MCF 10A (cell line): ENCODE measurements at regions of chr15 and their contacts with region 1.

Region 1: GRCh38 chr15:39580117-39580484 is 778 bp upstream of the THBS1 start:
- DNase-seq: peak; percentile 95
- H3K4me3 Mint-ChIP-seq: peak overlapping the region; percentile 78
- H3K27ac Mint-ChIP-seq: peak overlapping the region; percentile 24
- H3K4me1 Mint-ChIP-seq: peaks cover 38% of the 10 kb centered on the region
- H3K27me3 Mint-ChIP-seq: no peaks in the 10 kb centered on the region
- CTCF ChIP-seq: peak; percentile 96

Region 2: DNA sequence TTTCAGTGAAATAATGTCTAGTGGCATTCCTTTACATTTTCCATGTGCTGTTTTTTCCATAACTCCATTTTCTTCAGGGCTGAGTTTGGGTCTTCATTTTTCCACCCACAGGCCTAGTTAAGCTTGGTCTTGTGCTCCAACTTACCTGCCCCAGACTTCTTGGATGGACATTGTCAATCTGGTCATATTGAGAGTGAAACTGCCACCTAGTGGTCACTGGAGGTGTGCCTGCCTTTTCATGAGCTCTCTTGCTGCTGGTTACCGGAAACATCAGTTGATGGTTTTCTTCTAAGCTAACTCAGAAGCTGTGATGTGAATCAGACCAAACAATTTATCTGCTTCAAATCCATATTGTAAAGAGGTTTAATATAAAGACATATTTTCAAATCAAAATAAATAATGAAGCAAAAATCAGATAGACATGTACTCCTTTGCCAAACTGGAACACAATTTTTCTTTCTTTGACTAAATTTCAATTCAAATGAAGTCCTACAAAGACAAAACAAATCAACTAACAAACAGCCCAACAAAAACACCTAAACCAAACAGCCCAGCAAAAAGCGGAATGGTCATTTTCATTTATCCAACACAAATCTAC is 880.4 kb before region 1 on chr15:
- CTCF ChIA-PET with region 1: interaction called, 10 read pairs
- POLR2A ChIA-PET with region 1: no interaction called
- intact Hi-C with region 1: no loop called
- DNase-seq: peak; percentile 72
- H3K4me3 Mint-ChIP-seq: no peak overlapping the region
- H3K27ac Mint-ChIP-seq: no peak overlapping the region
- H3K4me1 Mint-ChIP-seq: no peaks in the 10 kb centered on the region
- H3K27me3 Mint-ChIP-seq: no peaks in the 10 kb centered on the region
- CTCF ChIP-seq: peak; percentile 68

Region 3: DNA sequence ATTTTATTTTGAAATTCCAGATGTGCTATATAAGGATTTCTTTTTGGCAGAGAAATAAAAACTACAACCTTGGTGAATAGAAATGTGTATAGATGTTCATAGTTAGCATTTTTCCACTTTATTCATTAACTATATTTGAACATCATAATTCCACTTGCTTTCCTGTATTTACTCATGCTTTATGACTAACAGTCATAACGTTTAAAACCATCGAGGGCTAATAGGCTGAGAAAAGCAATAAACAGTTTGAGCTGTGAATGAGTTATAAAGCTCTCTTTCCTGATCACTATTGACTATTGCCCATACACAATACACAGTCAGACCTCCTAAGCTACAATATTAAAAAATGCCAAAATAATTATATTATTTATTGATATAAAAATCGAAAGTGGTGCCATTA is 513.4 kb before region 1 on chr15:
- CTCF ChIA-PET with region 1: no interaction called
- POLR2A ChIA-PET with region 1: no interaction called
- intact Hi-C with region 1: no loop called
- DNase-seq: no peak
- H3K4me3 Mint-ChIP-seq: no peak overlapping the region
- H3K27ac Mint-ChIP-seq: no peak overlapping the region
- H3K4me1 Mint-ChIP-seq: no peaks in the 10 kb centered on the region
- H3K27me3 Mint-ChIP-seq: no peaks in the 10 kb centered on the region
- CTCF ChIP-seq: no peak

Region 4: GRCh38 chr15:39125904-39126303 is 454.2 kb before region 1 on chr15:
- CTCF ChIA-PET with region 1: interaction called, 3 read pairs
- POLR2A ChIA-PET with region 1: interaction called, 3 read pairs
- intact Hi-C with region 1: loop called (anchors 2 kb)
- DNase-seq: peak; percentile 78
- H3K4me3 Mint-ChIP-seq: no peak overlapping the region
- H3K27ac Mint-ChIP-seq: no peak overlapping the region
- H3K4me1 Mint-ChIP-seq: peaks cover 26% of the 10 kb centered on the region
- H3K27me3 Mint-ChIP-seq: no peaks in the 10 kb centered on the region
- CTCF ChIP-seq: peak; percentile 45

Region 5: GRCh38 chr15:39195988-39196486 is 384.1 kb before region 1 on chr15:
- CTCF ChIA-PET with region 1: interaction called, 16 read pairs
- POLR2A ChIA-PET with region 1: interaction called, 16 read pairs
- intact Hi-C with region 1: no loop called
- DNase-seq: peak; percentile 99
- H3K4me3 Mint-ChIP-seq: no peak overlapping the region
- H3K27ac Mint-ChIP-seq: peak overlapping the region; percentile 88
- H3K4me1 Mint-ChIP-seq: peaks cover 61% of the 10 kb centered on the region
- H3K27me3 Mint-ChIP-seq: no peaks in the 10 kb centered on the region
- CTCF ChIP-seq: no peak

Region 6: GRCh38 chr15:39404767-39405181 is 175.3 kb before region 1 on chr15:
- CTCF ChIA-PET with region 1: interaction called, 3 read pairs
- POLR2A ChIA-PET with region 1: interaction called, 5 read pairs
- intact Hi-C with region 1: loop called (anchors 5 kb)
- DNase-seq: peak; percentile 97
- H3K4me3 Mint-ChIP-seq: no peak overlapping the region
- H3K27ac Mint-ChIP-seq: no peak overlapping the region
- H3K4me1 Mint-ChIP-seq: peaks cover 22% of the 10 kb centered on the region
- H3K27me3 Mint-ChIP-seq: no peaks in the 10 kb centered on the region
- CTCF ChIP-seq: no peak

Region 7: GRCh38 chr15:39455471-39455991 is 124.6 kb before region 1 on chr15:
- CTCF ChIA-PET with region 1: no interaction called
- POLR2A ChIA-PET with region 1: no interaction called
- intact Hi-C with region 1: no loop called
- DNase-seq: peak; percentile 42
- H3K4me3 Mint-ChIP-seq: no peak overlapping the region
- H3K27ac Mint-ChIP-seq: peak overlapping the region; percentile 13
- H3K4me1 Mint-ChIP-seq: peaks cover 11% of the 10 kb centered on the region
- H3K27me3 Mint-ChIP-seq: no peaks in the 10 kb centered on the region
- CTCF ChIP-seq: no peak

Region 8: DNA sequence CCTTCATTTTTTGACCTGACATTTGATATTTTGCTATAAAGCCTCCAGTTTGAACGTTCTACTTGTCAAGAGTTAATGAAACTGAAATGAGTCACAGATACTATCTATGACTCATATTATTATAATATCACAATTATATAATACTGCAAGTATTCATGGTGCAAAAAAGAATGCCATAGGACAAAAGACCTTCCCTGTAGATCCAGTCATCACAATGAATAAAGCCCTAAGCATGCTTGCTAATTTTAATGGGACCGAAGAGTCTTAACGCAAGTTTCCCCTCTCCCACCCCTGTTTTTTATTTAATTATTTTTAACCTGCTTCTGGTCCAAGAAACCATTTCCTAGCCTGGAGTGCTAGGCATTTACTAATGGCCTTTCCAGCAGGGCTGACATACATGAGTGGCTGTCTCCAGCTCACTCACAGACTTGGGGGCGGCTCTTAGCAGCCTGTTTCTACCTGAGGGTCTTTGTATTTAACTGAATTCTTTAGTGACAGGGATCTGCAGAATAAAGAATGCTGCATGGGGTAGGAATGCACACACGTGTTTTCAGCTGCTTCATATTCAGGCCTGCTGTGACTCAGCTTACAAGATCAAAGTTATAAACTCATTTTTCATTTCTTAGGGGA is 62.0 kb after region 1 on chr15:
- CTCF ChIA-PET with region 1: interaction called, 5 read pairs
- POLR2A ChIA-PET with region 1: interaction called, 10 read pairs
- intact Hi-C with region 1: no loop called
- DNase-seq: peak; percentile 42
- H3K4me3 Mint-ChIP-seq: peak overlapping the region; percentile 50
- H3K27ac Mint-ChIP-seq: peak overlapping the region; percentile 46
- H3K4me1 Mint-ChIP-seq: peaks cover 14% of the 10 kb centered on the region
- H3K27me3 Mint-ChIP-seq: no peaks in the 10 kb centered on the region
- CTCF ChIP-seq: no peak

Region 9: GRCh38 chr15:39885099-39885777 is 305.1 kb after region 1 on chr15:
- CTCF ChIA-PET with region 1: no interaction called
- POLR2A ChIA-PET with region 1: no interaction called
- intact Hi-C with region 1: no loop called
- DNase-seq: peak; percentile 43
- H3K4me3 Mint-ChIP-seq: no peak overlapping the region
- H3K27ac Mint-ChIP-seq: peak overlapping the region; percentile 27
- H3K4me1 Mint-ChIP-seq: peaks cover 16% of the 10 kb centered on the region
- H3K27me3 Mint-ChIP-seq: no peaks in the 10 kb centered on the region
- CTCF ChIP-seq: no peak